ENCODE measurements at regions of chr2 and their contacts with region 1.

Region 1: DNA sequence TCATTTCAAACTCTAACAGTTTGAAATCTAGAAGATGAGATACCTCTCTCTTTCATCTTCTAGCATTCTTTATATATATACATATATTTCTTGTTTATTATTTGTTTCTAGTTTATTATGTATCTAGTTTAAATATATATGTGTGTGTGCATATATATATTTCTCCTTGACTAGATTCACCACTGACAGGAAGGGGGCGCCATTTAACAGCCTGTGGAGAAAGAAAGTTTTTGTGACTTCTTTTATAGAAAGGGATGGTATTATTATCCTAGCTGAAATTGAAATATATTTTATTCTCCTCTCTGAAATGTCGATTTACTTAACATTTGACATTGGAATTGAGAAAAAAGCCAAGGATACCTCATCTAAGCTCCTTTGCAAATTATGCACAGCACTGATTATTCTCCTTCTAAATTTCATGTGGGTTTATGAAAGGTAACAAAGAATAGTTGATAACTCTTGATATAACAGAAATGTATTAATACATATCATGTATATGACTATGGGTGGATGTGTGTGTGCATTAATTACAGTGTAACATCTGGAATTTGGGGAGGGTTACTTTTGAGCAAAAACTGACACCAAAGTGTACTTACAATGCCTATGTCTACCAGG is 160.7 kb upstream of the NT5C1B start:
- DNase-seq: no peak
- H3K4me3 ChIP-seq: no peak overlapping the region
- H3K27ac ChIP-seq: no peak overlapping the region
- H3K4me1 ChIP-seq: no peaks in the 10 kb centered on the region
- H3K27me3 ChIP-seq: no peaks in the 10 kb centered on the region
- CTCF ChIP-seq: peak; percentile 82

Region 2: GRCh38 chr2:18520451-18521425 is 229.3 kb before region 1 on chr2:
- intact Hi-C with region 1: loop called (anchors 10 kb)
- DNase-seq: peak; percentile 88
- H3K4me3 ChIP-seq: peak overlapping the region; percentile 45
- H3K27ac ChIP-seq: peak overlapping the region; percentile 64
- H3K4me1 ChIP-seq: peaks cover 44% of the 10 kb centered on the region
- H3K27me3 ChIP-seq: no peaks in the 10 kb centered on the region
- CTCF ChIP-seq: peak; percentile 92

Region 3: DNA sequence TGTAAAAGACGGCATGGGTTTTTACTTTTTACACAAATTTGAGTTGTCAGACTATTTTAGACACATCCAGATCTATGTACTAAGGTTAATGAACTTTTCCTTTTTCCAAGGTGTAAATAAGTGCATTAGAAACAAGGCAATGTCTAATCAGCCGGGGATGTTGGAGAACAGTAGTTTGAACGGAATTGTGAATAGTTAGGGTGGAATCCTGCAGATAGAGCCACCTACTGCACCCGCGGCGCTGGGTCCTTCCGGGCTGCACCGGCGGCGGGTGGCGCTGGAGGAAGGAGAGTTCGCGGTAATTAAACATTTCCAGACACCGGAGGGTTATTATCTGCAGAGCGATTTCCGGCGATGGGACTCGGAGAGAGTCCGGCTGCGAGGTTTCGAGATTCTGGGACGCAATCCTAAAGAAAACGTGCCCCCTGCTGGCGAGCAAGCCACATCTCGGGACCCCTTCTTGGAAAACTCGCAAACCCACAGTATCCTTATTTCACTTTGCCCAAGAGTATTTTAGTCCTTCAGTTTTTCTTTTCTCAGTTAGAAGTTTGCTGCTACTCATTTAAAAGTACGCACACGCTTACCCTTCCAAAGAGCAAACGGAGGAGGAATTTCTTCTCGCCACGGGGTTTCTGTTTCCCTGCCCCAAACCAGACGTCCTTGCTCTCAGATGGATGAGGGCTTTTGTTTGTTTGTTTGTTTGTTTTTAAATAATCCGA is 612.9 kb after region 1 on chr2:
- intact Hi-C with region 1: loop called (anchors 10 kb)
- DNase-seq: peak; percentile 75
- H3K4me3 ChIP-seq: peak overlapping the region; percentile 78
- H3K27ac ChIP-seq: peak overlapping the region; percentile 53
- H3K4me1 ChIP-seq: peaks cover 42% of the 10 kb centered on the region
- H3K27me3 ChIP-seq: peaks cover 46% of the 10 kb centered on the region
- CTCF ChIP-seq: peak; percentile 88

Region 4: GRCh38 chr2:19863303-19864041 is 1113.5 kb after region 1 on chr2:
- intact Hi-C with region 1: loop called (anchors 10 kb)
- DNase-seq: peak; percentile 69
- H3K4me3 ChIP-seq: peak overlapping the region; percentile 44
- H3K27ac ChIP-seq: peak overlapping the region; percentile 44
- H3K4me1 ChIP-seq: peaks cover 9% of the 10 kb centered on the region
- H3K27me3 ChIP-seq: peaks cover 7% of the 10 kb centered on the region
- CTCF ChIP-seq: peak; percentile 96

Measured in left ventricle myocardium inferior (tissue), 1 donor.